ENCODE measurements at regions of chr11 and their contacts with region 1.

Region 1: GRCh38 chr11:119356349-119357031 is 10.0 kb upstream of the MFRP start:
- DNase-seq: peak; percentile 84 to 92 (median 90)
- H3K4me3 ChIP-seq: peak overlapping the region; percentile 37
- H3K27ac ChIP-seq: peak overlapping the region; percentile 76 to 80
- H3K4me1 ChIP-seq: peaks cover 3% of the 10 kb centered on the region
- H3K27me3 ChIP-seq: no peaks in the 10 kb centered on the region
- CTCF ChIP-seq: peak; percentile 85 to 97 (median 90)
- EP300 ChIP-seq: peak; percentile 38
- POLR2A ChIP-seq: no peak

Region 2: DNA sequence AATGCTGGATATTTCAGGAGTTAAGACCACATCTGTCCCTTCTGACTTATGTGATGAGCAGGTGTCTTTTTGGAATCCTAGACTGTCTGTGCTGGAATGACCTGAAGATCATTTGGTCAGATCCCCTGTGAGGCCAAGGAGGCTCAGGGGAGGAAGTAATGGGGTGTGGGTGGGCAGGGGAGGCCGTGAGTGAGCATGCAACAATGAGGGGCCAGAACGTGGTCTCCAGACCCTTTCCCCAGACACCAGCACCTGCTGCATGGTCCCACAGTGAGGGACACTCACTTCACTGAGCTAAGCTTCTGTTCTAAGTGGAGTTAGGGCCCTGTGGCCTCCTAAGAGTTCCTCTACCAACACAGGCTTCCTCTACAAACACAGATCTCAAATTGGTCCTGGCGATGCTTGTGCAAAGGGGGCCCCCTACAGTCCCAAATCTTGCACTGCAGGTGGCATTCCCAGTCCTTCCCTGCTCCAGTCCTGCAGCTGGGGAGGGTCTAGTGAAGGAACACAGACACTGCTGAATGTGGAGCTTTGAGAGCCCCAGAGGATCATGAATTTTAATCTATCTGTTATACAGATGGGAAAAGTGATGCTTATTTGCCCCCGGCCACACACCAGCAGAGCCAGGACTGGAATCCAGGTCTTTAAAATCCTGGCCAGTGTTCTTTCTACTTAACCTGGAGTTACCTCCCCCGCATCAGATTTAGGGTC is 17.6 kb after region 1 on chr11:
- intact Hi-C with region 1: loop called in 1 of 4 experiments (anchors 2 kb)
- DNase-seq: peak in 4 of 5 donors; percentile 63 to 81 (median 69)
- H3K4me3 ChIP-seq: no peak overlapping the region
- H3K27ac ChIP-seq: no peak overlapping the region
- H3K4me1 ChIP-seq: no peaks in the 10 kb centered on the region
- H3K27me3 ChIP-seq: no peaks in the 10 kb centered on the region
- CTCF ChIP-seq: peak; percentile 20 to 62 (median 58)
- EP300 ChIP-seq: no peak
- POLR2A ChIP-seq: no peak

Region 3: DNA sequence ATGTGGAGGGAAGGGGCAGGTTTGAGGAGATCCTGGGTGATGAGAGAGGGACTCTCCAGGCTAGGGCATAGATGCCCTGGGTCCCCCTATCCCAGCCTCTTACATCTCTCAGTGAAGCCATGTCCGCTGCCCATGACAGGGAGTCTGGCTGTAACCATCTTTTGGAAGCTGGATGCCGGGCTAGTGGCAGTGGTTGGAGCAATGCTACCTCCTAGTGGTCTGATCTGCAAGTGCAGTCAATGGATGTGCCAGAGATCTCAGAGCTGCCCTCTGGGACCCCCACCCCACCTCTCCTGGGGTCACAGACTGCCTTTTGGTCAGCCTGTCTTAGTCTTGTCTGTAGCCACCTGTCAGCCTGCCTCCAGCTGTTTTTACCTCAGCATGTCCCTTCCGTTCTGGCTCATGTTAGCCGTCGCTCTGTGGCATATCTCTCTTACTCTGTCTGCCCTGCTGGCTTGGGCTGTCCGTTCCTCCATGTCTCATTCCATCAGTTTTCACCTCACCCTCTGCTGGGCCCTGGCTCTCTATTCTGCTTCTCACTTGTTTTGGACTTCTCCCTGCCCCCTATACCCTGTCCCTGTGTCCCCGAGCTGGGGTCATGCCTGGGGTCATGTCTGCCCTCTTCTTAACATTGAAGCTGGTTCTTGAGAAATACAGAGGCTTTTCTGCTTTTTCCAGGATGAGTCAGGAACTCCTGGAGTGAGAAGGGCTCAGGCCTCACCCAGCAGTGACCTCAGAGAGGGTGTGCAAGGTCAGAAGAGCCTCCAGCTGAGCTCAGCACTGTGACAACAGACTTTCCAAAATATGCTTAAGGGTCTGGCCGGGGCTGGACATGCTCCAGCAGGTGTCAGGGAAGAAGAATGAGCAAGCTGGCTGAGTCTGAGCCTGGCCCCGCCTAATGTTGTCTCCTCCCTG is 118.4 kb after region 1 on chr11:
- intact Hi-C with region 1: loop called (anchors 2 to 10 kb)
- DNase-seq: peak; percentile 36 to 72 (median 65)
- H3K4me3 ChIP-seq: no peak overlapping the region
- H3K27ac ChIP-seq: no peak overlapping the region
- H3K4me1 ChIP-seq: no peaks in the 10 kb centered on the region
- H3K27me3 ChIP-seq: no peaks in the 10 kb centered on the region
- CTCF ChIP-seq: peak; percentile 63 to 86 (median 66)
- EP300 ChIP-seq: no peak
- POLR2A ChIP-seq: no peak